Activated B cell treated with CpG ODN at 0.5 μM for 24 hours (primary cell): ENCODE measurements at regions of chr7 and their contacts with region 1.

Region 1: GRCh38 chr7:8295638-8296361 is 33.8 kb upstream of the ICA1 start:
- DNase-seq: no peak
- ATAC-seq: peak; percentile 67
- H3K4me3 Mint-ChIP-seq: no peak overlapping the region
- H3K27ac Mint-ChIP-seq: no peak overlapping the region
- H3K4me1 Mint-ChIP-seq: no peaks in the 10 kb centered on the region
- H3K27me3 Mint-ChIP-seq: peaks cover 6% of the 10 kb centered on the region
- CTCF ChIP-seq: no peak

Region 2: DNA sequence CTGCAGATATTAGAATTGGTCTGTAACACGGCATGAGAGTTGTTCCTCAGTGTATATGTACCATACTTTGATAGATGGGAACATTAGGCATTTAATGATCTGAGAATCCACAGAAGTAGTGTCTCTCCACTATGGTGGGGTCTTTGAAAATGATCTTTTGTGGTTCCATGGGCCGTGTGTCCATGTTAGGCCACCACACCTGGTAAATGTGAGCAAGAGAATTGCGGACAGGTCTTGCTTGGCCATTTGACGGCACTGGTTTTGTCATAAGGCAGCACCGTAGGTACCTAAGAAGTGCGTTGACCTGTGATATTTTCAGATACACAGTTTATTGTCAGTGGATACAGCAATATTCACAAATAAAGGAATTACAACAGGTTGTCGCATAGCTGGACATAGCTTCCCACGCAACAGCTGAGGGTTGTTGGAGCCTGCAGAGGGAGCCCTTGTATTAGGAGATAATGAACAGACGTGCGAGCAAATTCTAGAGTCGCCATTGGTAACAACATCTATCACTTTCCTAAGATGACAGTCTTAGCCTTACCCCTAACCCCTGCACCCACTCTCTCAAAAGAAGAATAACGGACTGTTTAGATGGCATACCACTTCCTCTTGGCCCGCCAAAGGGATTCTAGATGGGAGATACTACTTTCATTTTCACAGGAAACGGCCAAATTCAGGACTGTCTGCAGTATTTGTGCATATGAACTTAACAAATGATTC is 871.5 kb before region 1 on chr7:
- CTCF ChIA-PET with region 1: no interaction called
- POLR2A ChIA-PET with region 1: no interaction called
- intact Hi-C with region 1: loop called (anchors 1 kb)
- DNase-seq: no peak
- ATAC-seq: peak; percentile 75
- H3K4me3 Mint-ChIP-seq: peak overlapping the region; percentile 86
- H3K27ac Mint-ChIP-seq: peak overlapping the region; percentile 37
- H3K4me1 Mint-ChIP-seq: peaks cover 6% of the 10 kb centered on the region
- H3K27me3 Mint-ChIP-seq: no peaks in the 10 kb centered on the region
- CTCF ChIP-seq: no peak

Region 3: DNA sequence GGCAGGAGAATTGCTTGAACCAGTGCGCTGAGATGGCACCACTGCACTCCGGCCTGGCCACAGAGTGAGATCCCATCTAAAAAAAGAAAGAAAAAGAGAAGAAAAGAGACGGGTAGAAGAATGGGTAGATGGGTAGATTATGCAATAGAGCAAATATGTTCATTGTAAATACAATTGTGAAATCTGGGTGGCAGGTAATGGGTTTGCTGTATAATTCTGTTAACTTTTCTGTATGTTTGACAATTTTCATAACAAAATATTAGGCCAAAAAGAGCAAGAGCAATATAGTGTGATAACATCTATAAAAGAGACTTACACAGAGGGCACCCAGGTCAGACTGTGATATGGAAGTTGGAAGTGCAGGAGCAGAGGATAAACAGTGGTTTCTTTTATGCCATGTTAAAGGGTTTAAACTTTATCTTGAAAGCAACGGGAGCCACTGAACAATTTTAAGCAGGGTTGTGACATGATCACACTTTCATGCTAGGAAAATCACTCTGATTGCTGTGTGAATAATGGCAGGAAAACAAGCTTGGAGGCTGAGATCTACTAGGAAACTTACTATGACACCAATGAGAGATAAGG is 753.5 kb before region 1 on chr7:
- CTCF ChIA-PET with region 1: no interaction called
- POLR2A ChIA-PET with region 1: no interaction called
- intact Hi-C with region 1: loop called (anchors 2 kb)
- DNase-seq: no peak
- ATAC-seq: no peak
- H3K4me3 Mint-ChIP-seq: no peak overlapping the region
- H3K27ac Mint-ChIP-seq: no peak overlapping the region
- H3K4me1 Mint-ChIP-seq: peaks cover 2% of the 10 kb centered on the region
- H3K27me3 Mint-ChIP-seq: peaks cover 6% of the 10 kb centered on the region
- CTCF ChIP-seq: no peak

Region 4: DNA sequence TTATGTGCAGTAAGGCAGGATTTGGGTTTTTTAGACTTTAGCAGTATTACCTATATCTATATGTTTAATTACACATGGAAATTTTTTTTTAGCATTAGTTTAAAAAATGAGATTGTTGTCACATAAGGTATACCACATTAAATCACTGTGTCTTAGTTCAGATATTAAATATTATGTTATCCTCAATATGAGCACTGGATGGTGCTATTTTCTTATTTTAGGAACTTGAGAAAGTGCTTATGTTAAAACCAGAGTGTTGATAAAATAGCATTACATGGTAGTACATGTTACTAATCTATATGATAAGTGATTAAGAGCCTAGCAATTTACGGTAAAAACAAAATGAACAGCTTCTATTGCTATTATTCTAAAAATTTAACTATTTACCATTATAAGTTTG is 700.3 kb before region 1 on chr7:
- CTCF ChIA-PET with region 1: interaction called, 4 read pairs
- POLR2A ChIA-PET with region 1: no interaction called
- intact Hi-C with region 1: loop called (anchors 1 kb)
- DNase-seq: no peak
- ATAC-seq: peak; percentile 56
- H3K4me3 Mint-ChIP-seq: no peak overlapping the region
- H3K27ac Mint-ChIP-seq: no peak overlapping the region
- H3K4me1 Mint-ChIP-seq: no peaks in the 10 kb centered on the region
- H3K27me3 Mint-ChIP-seq: no peaks in the 10 kb centered on the region
- CTCF ChIP-seq: no peak

Region 5: DNA sequence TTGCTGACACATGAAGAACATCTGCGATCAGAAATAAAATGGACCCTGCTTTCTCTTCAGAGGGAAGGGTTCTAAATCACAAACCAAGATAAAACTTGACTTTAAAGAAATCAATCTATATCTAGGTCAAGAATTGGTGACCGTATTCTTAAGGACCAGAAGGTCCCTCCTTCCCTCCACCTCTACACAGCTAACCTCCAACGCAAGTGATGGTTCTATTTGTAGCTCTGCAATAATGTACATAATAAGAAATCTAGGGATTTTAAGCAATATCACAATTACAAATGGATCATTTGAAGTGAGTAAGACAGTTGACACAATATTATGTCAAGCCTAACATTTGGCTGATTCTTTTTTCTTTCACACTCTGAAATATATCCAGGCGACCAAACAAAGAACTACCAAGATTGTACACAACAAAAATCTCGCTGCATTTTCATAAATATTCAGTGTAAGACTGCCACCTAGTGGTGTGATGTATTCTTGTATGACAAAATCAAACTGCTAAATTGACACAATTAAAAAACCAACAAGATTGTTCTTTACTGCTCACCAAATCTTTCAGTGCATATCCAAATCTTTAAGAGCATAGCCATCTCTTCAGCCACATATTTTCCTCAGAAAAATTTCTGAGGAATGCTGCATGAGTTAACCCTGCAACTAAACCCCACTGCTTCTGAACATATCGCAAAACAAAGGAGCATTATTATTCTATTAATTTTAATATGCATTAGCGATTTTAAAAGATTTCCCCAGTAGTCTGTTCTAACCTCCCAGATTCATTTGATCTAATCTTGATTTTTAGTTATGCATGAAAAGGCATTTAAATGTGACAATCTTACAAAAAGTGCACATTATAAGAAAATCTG is 78.4 kb before region 1 on chr7:
- CTCF ChIA-PET with region 1: interaction called, 3 read pairs
- POLR2A ChIA-PET with region 1: no interaction called
- intact Hi-C with region 1: loop called (anchors 1 kb)
- DNase-seq: no peak
- ATAC-seq: no peak
- H3K4me3 Mint-ChIP-seq: no peak overlapping the region
- H3K27ac Mint-ChIP-seq: no peak overlapping the region
- H3K4me1 Mint-ChIP-seq: no peaks in the 10 kb centered on the region
- H3K27me3 Mint-ChIP-seq: no peaks in the 10 kb centered on the region
- CTCF ChIP-seq: no peak

Region 6: DNA sequence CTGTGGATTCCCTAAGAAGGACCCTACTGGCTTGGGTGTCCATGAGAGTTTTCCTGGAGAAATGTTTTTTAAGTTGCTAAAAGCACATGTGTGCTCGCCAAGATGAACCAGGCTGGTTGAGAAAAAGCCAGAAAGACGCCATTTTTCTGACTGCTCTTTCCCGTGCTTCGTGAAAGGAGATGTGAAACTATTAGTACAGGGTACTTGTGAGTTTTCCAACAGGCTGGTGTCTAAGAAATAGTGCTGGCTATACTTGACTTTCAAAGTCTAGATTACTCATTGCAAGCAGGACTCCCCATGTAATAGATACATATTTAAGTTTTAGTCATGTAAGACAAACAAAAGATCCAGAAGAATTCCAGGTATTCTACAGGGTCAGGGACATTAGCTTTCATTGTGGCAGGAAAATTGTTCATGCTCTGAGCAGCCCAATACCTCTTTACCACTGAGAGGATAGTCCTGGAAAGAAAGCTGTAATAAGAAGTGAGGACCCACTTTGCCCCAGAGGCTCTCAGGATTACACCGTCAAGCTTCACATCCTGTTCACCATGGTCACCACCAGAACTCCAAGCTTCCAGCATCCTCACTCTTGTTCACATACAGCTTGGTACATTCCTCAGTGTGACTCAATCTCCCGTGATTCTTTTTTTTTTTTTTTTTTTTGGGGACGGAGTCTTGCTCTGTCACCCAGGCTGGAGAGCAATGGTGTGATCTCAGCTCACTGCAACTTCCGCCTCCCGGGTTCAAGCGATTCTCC is 10.0 kb after region 1 on chr7:
- CTCF ChIA-PET with region 1: interaction called, 12 read pairs
- POLR2A ChIA-PET with region 1: no interaction called
- intact Hi-C with region 1: no loop called
- DNase-seq: no peak
- ATAC-seq: no peak
- H3K4me3 Mint-ChIP-seq: no peak overlapping the region
- H3K27ac Mint-ChIP-seq: no peak overlapping the region
- H3K4me1 Mint-ChIP-seq: no peaks in the 10 kb centered on the region
- H3K27me3 Mint-ChIP-seq: peaks cover 14% of the 10 kb centered on the region
- CTCF ChIP-seq: no peak

Region 7: GRCh38 chr7:8379264-8379663 is 83.5 kb after region 1 on chr7:
- CTCF ChIA-PET with region 1: no interaction called
- POLR2A ChIA-PET with region 1: no interaction called
- intact Hi-C with region 1: no loop called
- DNase-seq: no peak
- ATAC-seq: no peak
- H3K4me3 Mint-ChIP-seq: no peak overlapping the region
- H3K27ac Mint-ChIP-seq: no peak overlapping the region
- H3K4me1 Mint-ChIP-seq: no peaks in the 10 kb centered on the region
- H3K27me3 Mint-ChIP-seq: peaks cover 11% of the 10 kb centered on the region
- CTCF ChIP-seq: no peak